GM18951 (cell line): ENCODE measurements at regions of chr13 and their contacts with region 1.

Region 1: GRCh38 chr13:27374650-27375049 is 49.8 kb upstream of the GTF3A start:
- POLR2A ChIP-seq: no peak

Region 2: DNA sequence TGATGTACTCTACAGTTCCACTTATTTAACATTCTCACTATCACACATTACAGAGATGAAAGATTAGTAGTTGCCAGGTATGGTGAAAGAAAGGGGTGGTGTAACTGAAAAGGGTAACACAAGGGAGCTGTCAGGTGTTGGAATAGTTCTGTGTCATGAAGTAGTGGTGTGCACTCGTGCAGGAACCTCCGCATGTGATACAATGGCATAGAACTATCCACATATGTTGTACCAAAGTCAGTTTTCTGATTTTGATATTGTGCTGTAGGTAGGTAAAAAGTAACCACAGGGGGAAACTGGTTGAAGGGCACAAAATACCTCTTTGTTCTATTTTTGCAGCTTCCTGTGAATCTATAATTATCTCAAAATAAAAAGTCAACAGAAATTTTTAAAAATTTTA is 147.7 kb before region 1 on chr13:
- in situ Hi-C with region 1: no loop called
- POLR2A ChIP-seq: no peak

Region 3: DNA sequence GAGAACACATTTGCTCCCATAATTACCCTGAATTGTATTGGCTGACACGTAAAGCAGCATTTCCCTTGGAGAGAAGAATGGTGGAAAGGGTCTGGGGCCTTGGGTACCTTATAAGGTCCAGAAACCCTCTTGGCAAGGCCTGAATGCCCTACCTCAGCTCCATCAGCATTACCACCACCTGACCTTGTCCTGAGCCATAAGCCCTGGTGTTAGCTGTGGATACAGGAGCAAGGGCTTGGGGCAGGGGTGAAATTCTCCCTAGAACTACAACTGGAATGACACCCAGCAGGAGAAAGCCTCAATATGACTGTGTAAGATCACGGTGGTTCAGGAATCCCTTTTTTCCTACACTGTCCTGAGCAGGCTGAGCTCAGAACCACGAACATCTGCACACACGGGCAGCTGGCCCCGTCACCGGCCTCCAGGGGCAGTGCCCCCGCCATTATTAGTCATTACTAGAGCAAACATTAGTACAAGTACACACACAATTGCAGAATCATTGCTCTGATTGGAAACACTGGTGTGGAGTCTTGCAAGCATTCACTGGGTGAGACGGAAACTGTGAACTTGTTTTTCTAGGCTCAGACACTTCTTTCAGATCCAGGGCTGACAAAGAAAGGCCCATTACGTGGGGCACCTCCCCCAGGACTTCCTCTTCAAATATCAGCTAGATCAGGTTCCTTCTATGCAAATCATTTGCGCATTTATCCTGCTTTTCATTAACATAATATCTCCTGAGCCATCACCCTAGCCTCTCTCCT is 102.5 kb after region 1 on chr13:
- in situ Hi-C with region 1: loop called (anchors 10 kb)
- POLR2A ChIP-seq: no peak

Region 4: GRCh38 chr13:27810461-27810860 is 435.8 kb after region 1 on chr13:
- in situ Hi-C with region 1: loop called (anchors 10 kb)
- POLR2A ChIP-seq: no peak

Region 5: GRCh38 chr13:27953676-27954405 is 579.2 kb after region 1 on chr13:
- in situ Hi-C with region 1: loop called (anchors 25 kb)
- POLR2A ChIP-seq: peak; percentile 33

Region 6: DNA sequence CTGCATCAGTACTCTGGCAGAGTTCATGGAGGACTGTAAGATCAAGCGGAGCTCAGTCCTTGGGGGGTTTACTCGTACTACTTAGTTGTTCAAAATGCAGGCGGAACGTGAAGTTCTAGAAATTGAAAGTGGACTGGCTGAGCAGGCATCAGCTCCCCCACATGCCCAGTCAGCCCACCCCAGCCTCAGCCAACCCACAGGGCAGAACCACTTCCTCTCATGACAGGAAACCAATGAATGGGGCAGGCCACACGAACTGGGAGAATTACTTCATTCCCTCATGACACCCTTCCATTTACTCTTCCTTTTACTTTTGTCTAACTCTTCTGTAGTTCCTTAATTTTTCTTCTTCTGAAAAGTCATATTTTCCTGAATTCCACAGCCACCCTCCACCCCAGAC is 1048.4 kb after region 1 on chr13:
- in situ Hi-C with region 1: no loop called
- POLR2A ChIP-seq: peak; percentile 30